ENCODE measurements at regions of chrX and their contacts with region 1.

Region 1: DNA sequence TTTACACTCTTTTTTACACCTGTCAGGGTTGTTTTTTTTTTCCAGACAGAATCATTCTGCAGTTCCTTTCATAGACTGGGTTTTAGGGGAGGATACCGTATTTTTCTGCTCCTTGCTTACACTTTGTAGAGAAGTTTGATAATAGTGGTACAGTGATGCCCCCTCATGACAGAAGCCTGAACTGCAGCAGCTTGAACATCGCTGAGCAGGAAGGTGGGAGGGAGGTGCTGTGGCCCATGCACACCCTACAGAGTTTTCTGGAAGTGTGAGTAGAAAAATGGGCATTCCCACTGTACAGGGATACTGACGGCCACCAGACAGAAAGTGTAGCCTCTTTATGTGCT is 54.5 kb downstream of the RAB40A start:
- DNase-seq: peak; percentile 82
- ATAC-seq: peak; percentile 93
- H3K4me3 Mint-ChIP-seq: peak overlapping the region; percentile 76
- H3K27ac Mint-ChIP-seq: peak overlapping the region; percentile 63
- H3K4me1 Mint-ChIP-seq: peaks cover 11% of the 10 kb centered on the region
- H3K27me3 Mint-ChIP-seq: peaks cover 4% of the 10 kb centered on the region

Region 2: DNA sequence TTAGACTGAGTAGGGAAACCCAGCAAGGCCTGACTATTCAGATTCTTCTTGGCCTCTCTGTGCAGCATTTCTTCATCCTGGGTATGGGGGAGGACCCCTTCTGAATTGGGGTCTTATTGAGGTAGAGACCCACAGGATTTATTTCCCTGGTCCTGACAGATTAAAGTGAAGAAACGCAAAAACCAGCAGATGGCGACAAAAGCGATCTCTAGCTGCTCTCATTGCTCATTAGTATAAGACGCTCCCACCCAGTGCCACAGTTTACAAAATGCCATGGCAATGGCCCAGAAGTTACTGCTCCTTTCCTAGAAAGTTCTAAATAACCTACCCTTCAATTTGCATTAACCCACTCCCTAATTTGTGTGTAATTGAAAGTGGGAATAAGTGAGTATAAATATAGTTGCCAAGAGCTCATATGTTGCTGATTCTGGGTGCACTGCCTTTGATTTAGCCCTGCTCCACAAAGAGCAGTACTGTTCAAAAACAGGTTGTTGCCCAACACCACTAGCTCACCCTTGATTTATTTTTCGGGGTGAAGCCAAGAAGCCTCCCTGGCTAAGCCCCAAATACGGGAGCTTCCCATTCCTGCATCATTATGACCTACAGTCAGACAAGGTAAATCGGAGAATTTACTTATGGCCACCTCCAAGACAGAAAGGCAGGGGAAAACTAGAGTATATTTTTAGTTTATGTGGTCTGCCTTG is 253.6 kb before region 1 on chrX:
- CTCF ChIA-PET with region 1: interaction called, 21 read pairs
- POLR2A ChIA-PET with region 1: no interaction called
- DNase-seq: peak; percentile 62
- ATAC-seq: peak; percentile 31
- H3K4me3 Mint-ChIP-seq: no peak overlapping the region
- H3K27ac Mint-ChIP-seq: no peak overlapping the region
- H3K4me1 Mint-ChIP-seq: peaks cover 6% of the 10 kb centered on the region
- H3K27me3 Mint-ChIP-seq: peaks cover 4% of the 10 kb centered on the region

Region 3: GRCh38 chrX:103343105-103343504 is 121.6 kb before region 1 on chrX:
- CTCF ChIA-PET with region 1: interaction called, 12 read pairs
- POLR2A ChIA-PET with region 1: no interaction called
- DNase-seq: peak; percentile 46
- ATAC-seq: no peak
- H3K4me3 Mint-ChIP-seq: no peak overlapping the region
- H3K27ac Mint-ChIP-seq: no peak overlapping the region
- H3K4me1 Mint-ChIP-seq: peaks cover 2% of the 10 kb centered on the region
- H3K27me3 Mint-ChIP-seq: peaks cover 10% of the 10 kb centered on the region

Region 4: DNA sequence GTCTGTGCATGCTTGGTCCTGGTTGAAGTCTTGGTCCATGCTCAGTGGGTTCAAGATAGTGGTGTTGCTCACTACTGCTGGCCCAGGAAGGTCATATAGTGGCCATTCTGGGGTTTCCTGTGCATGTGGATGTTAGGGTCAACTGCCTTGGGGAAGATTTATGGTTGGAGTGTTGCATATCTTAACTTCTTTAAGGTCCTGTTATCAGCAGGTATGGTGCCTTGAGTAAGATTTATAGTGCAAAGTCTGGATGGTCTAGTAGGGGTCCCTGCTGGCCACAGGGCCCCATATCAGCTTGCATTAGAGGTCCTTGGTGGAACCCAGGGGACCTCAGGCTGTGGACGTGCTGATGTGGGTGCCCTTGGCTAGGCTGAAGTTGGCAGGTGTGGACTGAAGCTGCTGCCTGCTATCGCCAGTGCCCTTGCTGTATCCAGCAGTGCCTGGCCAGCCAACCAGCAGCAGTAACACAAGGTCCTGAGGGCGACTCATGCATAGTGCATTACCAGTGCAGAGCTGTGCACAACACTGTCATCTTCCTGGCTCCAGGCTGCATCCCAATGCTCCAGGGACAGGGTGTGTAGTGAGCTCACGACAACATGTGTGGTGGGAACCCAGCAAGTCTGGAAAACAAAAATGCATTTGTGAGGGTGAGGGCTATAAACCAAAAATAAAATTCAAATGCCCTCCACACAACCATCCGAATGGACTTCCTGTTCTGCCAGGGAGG is 27.4 kb before region 1 on chrX:
- CTCF ChIA-PET with region 1: no interaction called
- POLR2A ChIA-PET with region 1: no interaction called
- DNase-seq: no peak
- ATAC-seq: no peak
- H3K4me3 Mint-ChIP-seq: no peak overlapping the region
- H3K27ac Mint-ChIP-seq: no peak overlapping the region
- H3K4me1 Mint-ChIP-seq: no peaks in the 10 kb centered on the region
- H3K27me3 Mint-ChIP-seq: no peaks in the 10 kb centered on the region

Region 5: GRCh38 chrX:103488794-103489193 is 24.0 kb after region 1 on chrX:
- CTCF ChIA-PET with region 1: interaction called, 11 read pairs
- POLR2A ChIA-PET with region 1: no interaction called
- DNase-seq: no peak
- ATAC-seq: no peak
- H3K4me3 Mint-ChIP-seq: no peak overlapping the region
- H3K27ac Mint-ChIP-seq: no peak overlapping the region
- H3K4me1 Mint-ChIP-seq: no peaks in the 10 kb centered on the region
- H3K27me3 Mint-ChIP-seq: peaks cover 6% of the 10 kb centered on the region

Region 6: GRCh38 chrX:103629318-103630170 is 164.8 kb after region 1 on chrX:
- CTCF ChIA-PET with region 1: no interaction called
- POLR2A ChIA-PET with region 1: no interaction called
- DNase-seq: peak; percentile 20
- ATAC-seq: peak; percentile 59
- H3K4me3 Mint-ChIP-seq: peak overlapping the region; percentile 83
- H3K27ac Mint-ChIP-seq: peak overlapping the region; percentile 76
- H3K4me1 Mint-ChIP-seq: peaks cover 14% of the 10 kb centered on the region
- H3K27me3 Mint-ChIP-seq: no peaks in the 10 kb centered on the region